ENCODE measurements at regions of chr7 and their contacts with region 1.

Region 1: DNA sequence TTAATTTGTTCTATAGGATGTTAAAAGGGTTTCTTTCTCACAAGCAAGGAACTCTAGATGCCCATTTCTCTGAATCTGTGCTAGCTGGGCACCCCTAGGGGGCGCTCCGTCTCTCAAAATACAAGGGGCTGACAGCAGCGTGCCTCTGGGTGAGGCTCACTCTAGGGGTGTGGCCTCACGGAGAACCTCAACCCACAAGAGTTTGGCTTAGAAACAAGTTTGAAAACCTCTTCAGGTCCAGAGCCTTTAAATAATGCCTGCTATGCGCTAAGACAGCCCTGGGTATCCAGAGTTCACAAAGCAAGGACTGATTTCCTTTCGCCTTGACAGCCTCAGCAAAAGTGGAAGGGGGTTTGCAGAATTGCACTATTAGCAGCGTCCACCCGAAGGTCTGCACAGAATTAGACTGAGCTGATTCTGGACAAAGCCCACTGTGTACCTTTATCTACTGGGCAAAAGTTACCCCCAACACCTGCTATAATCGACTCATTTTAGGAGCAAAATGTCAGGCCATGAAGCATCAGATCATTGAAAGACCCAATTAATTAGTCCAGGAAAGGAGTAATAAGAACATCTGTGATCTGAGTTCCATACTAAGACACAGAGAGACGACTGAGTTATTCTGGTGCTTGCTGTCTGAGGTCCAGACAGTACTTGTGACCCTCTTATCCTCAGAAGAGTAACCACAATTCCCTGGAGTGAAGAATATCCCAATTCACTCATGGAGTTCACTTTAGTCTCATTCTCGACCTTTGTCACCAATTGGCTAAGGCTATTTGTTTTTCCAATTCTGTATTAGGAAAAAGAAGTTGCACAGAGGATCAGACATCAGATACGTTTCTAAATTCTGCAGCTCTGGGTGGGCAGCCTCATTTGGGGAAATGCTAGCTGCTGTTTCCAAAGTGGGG is 574 bp upstream of the CPED1 start:
- DNase-seq: peak; percentile 70
- H3K4me3 ChIP-seq: peak overlapping the region; percentile 45
- H3K27me3 ChIP-seq: no peaks in the 10 kb centered on the region
- CTCF ChIP-seq: peak; percentile 97

Region 2: GRCh38 chr7:120320218-120320961 is 667.5 kb before region 1 on chr7:
- CTCF ChIA-PET with region 1: no interaction called
- POLR2A ChIA-PET with region 1: no interaction called
- DNase-seq: no peak
- H3K4me3 ChIP-seq: no peak overlapping the region
- H3K27me3 ChIP-seq: no peaks in the 10 kb centered on the region
- CTCF ChIP-seq: no peak

Region 3: GRCh38 chr7:120916121-120916520 is 71.8 kb before region 1 on chr7:
- CTCF ChIA-PET with region 1: no interaction called
- POLR2A ChIA-PET with region 1: no interaction called
- DNase-seq: no peak
- H3K4me3 ChIP-seq: no peak overlapping the region
- H3K27me3 ChIP-seq: no peaks in the 10 kb centered on the region
- CTCF ChIP-seq: no peak

Region 4: GRCh38 chr7:121000081-121000983 is 12.4 kb after region 1 on chr7:
- CTCF ChIA-PET with region 1: interaction called, 29 read pairs
- POLR2A ChIA-PET with region 1: no interaction called
- DNase-seq: no peak
- H3K4me3 ChIP-seq: no peak overlapping the region
- H3K27me3 ChIP-seq: no peaks in the 10 kb centered on the region
- CTCF ChIP-seq: no peak

Region 5: GRCh38 chr7:121027761-121028669 is 40.1 kb after region 1 on chr7:
- CTCF ChIA-PET with region 1: interaction called, 19 read pairs
- POLR2A ChIA-PET with region 1: interaction called, 3 read pairs
- DNase-seq: no peak
- H3K4me3 ChIP-seq: no peak overlapping the region
- H3K27me3 ChIP-seq: no peaks in the 10 kb centered on the region
- CTCF ChIP-seq: no peak

Region 6: GRCh38 chr7:121081327-121081936 is 93.5 kb after region 1 on chr7:
- CTCF ChIA-PET with region 1: interaction called, 136 read pairs
- POLR2A ChIA-PET with region 1: no interaction called
- DNase-seq: peak; percentile 28
- H3K4me3 ChIP-seq: no peak overlapping the region
- H3K27me3 ChIP-seq: no peaks in the 10 kb centered on the region
- CTCF ChIP-seq: peak; percentile 64

Region 7: DNA sequence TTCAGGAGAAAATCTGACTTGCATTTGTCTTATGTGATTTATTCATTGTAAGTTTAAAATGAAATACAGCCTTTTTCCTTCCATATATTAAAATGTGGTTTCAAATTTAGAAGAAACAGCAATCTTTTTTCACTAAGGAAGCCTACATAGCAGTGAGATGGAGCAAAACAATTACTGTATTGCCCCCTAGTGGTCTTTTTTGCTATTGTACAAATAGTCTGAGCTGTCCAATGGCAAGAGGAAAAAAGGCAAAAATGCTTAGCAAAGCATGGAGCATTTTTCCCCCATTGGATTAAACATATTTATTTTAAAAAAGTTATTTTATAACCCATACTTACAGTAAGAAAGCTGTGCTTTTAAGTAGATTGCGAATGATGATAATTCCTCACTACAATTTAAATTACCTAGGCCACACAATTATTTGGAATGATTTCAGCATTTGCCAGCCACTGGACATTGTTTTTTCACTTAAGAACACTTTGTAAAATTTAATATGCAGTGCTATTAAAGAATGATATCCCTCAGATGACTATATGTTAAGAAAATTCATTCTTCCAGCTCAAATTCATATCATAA is 120.1 kb after region 1 on chr7:
- CTCF ChIA-PET with region 1: interaction called, 68 read pairs
- POLR2A ChIA-PET with region 1: interaction called, 3 read pairs
- DNase-seq: peak; percentile 17
- H3K4me3 ChIP-seq: no peak overlapping the region
- H3K27me3 ChIP-seq: no peaks in the 10 kb centered on the region
- CTCF ChIP-seq: peak; percentile 64

Region 8: DNA sequence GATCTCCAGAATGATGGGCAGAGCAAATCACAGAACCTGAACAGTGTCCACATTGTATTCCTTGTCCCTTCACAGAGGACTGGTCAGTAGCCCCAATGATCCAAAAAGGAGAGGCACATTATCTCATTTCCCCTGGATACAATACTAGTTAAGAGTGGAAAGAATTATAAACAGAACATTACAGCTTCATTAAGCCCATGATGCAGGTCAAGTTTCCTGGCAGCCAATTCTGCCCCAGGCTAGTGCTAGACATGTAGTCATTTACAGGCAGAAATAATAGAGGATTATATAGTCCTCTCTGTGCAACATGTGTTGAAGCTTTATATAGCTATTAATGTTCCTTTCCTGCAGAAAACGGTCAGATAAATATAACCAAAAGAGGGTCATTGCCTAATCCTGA is 216.6 kb after region 1 on chr7:
- CTCF ChIA-PET with region 1: no interaction called
- POLR2A ChIA-PET with region 1: no interaction called
- DNase-seq: peak; percentile 64
- H3K4me3 ChIP-seq: no peak overlapping the region
- H3K27me3 ChIP-seq: no peaks in the 10 kb centered on the region
- CTCF ChIP-seq: no peak

Measured in BJ (cell line).